ENCODE measurements at regions of chr9 and their contacts with region 1.

Region 1: DNA sequence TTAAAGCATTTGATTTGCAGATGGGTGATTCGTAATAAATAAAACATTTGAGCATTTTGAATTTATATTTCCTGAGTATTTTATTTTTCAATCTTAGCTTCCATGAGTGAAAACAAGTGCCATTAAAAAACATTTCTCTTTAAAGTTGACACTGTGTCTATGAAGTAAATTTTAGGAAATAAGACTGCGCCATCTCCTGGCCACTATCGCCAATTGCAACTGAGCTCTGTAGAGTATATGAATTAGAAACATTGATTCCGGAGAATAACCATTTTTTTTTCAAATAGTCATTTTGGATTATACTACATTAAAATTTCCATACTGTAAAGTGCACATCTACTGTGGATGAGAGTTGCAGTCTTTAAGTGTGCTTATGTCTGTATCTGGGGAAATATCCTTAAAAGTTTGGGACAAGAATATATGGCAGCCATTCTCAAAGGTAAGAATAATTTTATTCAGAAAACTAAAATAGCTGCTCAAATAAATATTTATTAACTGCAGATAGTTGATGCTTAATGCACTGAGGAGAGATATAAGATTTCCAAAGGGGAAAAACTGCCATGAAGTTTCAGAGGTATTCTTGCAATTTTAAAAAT is 5.9 kb downstream of the DMRTA1 start:
- DNase-seq: peak in 5 of 9 donors; percentile 8 to 31 (median 11)
- ATAC-seq: peak; percentile 70
- H3K4me3 ChIP-seq: no peak overlapping the region
- H3K4me3 Mint-ChIP-seq: no peak overlapping the region
- H3K27ac ChIP-seq: no peak overlapping the region
- H3K27ac Mint-ChIP-seq: no peak overlapping the region
- H3K4me1 ChIP-seq: no peaks in the 10 kb centered on the region
- H3K4me1 Mint-ChIP-seq: peaks cover 0 to 5% (median 2%) of the 10 kb centered on the region in 7 donors
- H3K27me3 ChIP-seq: peaks cover 6 to 10% of the 10 kb centered on the region in 2 donors
- H3K27me3 Mint-ChIP-seq: peaks cover 28 to 65% (median 37%) of the 10 kb centered on the region in 5 donors

Region 2: DNA sequence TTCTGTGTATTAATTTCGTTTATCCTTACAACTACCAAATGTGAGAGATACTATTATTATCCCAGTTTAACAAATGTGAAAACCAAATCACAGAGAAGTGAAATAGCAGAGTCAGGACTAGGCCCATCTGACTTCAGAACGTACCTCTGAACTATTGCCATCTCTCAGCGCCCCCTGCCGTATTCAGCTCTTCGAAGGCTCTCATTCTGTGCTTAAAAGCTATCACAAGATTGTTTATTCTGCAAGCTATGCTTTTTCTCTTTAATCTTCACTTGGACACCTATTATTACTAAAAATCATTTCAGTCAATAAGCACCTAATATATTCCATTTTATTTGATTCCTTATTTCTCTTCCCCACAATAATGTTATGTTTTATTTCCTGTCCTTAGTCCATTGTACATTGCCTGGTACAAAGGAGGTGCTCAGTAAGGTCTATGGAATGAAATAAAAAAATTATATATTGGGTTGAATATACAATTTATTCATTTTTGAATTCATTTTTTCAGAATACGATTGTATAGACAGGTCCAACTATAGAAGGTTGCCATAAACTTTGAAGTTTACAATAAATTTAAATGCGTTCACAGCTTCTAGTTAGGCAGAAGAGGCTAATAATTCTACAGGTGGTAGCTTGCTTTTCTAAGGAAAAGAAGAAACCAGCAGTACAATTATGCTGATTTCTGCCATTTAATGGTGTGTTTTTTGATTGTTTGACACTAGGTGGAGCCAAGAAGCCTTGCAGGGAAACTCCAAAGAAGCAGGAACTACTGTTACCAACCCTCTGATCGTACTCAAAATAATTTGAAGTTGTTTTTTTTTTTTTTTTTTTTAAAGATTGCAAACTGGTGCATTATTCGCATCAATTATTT is 208.1 kb before region 1 on chr9:
- CTCF ChIA-PET with region 1: interaction called, 3 read pairs
- POLR2A ChIA-PET with region 1: no interaction called
- intact Hi-C with region 1: loop called (anchors 1 kb)
- DNase-seq: peak in 6 of 9 donors; percentile 5 to 35 (median 16)
- ATAC-seq: peak; percentile 84
- H3K4me3 ChIP-seq: no peak overlapping the region
- H3K4me3 Mint-ChIP-seq: peak overlapping the region in 6 of 10 donors; percentile 6 to 61 (median 38)
- H3K27ac ChIP-seq: no peak overlapping the region
- H3K27ac Mint-ChIP-seq: no peak overlapping the region
- H3K4me1 ChIP-seq: no peaks in the 10 kb centered on the region
- H3K4me1 Mint-ChIP-seq: peaks cover 0 to 20% (median 9%) of the 10 kb centered on the region in 7 donors
- H3K27me3 ChIP-seq: no peaks in the 10 kb centered on the region
- H3K27me3 Mint-ChIP-seq: peaks cover 5 to 55% (median 14%) of the 10 kb centered on the region in 5 donors

Region 3: GRCh38 chr9:22307013-22307711 is 145.4 kb before region 1 on chr9:
- CTCF ChIA-PET with region 1: no interaction called
- POLR2A ChIA-PET with region 1: no interaction called
- intact Hi-C with region 1: loop called in 1 of 2 experiments (anchors 2 kb)
- DNase-seq: no peak
- ATAC-seq: no peak
- H3K4me3 ChIP-seq: no peak overlapping the region
- H3K4me3 Mint-ChIP-seq: no peak overlapping the region
- H3K27ac ChIP-seq: no peak overlapping the region
- H3K27ac Mint-ChIP-seq: no peak overlapping the region
- H3K4me1 ChIP-seq: no peaks in the 10 kb centered on the region
- H3K4me1 Mint-ChIP-seq: no peaks in the 10 kb centered on the region
- H3K27me3 ChIP-seq: no peaks in the 10 kb centered on the region
- H3K27me3 Mint-ChIP-seq: peaks cover 0 to 22% (median 12%) of the 10 kb centered on the region in 5 donors

Region 4: GRCh38 chr9:22649384-22649783 is 196.9 kb after region 1 on chr9:
- CTCF ChIA-PET with region 1: no interaction called
- POLR2A ChIA-PET with region 1: no interaction called
- intact Hi-C with region 1: no loop called
- DNase-seq: no peak
- ATAC-seq: no peak
- H3K4me3 ChIP-seq: no peak overlapping the region
- H3K4me3 Mint-ChIP-seq: no peak overlapping the region
- H3K27ac ChIP-seq: no peak overlapping the region
- H3K27ac Mint-ChIP-seq: no peak overlapping the region
- H3K4me1 ChIP-seq: no peaks in the 10 kb centered on the region
- H3K4me1 Mint-ChIP-seq: no peaks in the 10 kb centered on the region
- H3K27me3 ChIP-seq: no peaks in the 10 kb centered on the region
- H3K27me3 Mint-ChIP-seq: no peaks in the 10 kb centered on the region

Measured in naive thymus-derived CD4-positive, alpha-beta T cell (primary cell).